ENCODE measurements at regions of chr17 and their contacts with region 1.

Region 1: GRCh38 chr17:38605888-38606645 is at the start of gene SRCIN1:
- DNase-seq: peak; percentile 74
- ATAC-seq: peak; percentile 5
- H3K4me3 Mint-ChIP-seq: peak within 1 kb of the TSS; percentile 71
- H3K27ac Mint-ChIP-seq: no peak within 1 kb of the TSS
- H3K4me1 Mint-ChIP-seq: peaks cover 72% of the 10 kb centered on the region
- H3K27me3 Mint-ChIP-seq: peaks cover 44% of the 10 kb centered on the region
- CTCF ChIP-seq: peak; percentile 99
- total RNA-seq, gene SRCIN1: 10.7 to 17.3 TPM (median 11.1 TPM) in 3 replicates

Region 2: DNA sequence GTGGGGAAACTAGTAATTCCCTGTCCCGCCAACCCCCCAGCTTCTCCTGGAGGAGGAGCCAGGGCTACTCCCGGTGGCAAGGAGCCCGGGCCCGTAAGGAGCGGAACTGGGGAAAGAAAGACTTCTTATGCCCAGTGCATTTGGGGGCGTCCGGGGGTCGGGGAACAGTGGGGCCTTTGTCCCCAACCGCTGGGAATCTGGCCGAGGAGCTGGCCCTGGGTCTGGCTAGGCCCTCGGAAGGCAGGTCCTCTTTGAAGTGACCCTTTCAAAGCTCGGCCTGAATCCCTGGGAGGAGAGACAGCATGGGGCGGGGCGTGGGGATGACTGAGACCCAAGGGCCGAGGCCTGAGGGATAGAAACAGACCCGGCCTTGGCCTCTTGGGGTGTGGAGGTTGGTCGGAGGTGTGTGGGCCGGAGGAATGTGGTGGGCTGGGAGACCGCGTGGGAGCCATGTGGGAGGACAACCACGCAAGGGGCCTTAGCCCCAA is 171.8 kb before region 1 on chr17:
- CTCF ChIA-PET with region 1: no interaction called
- POLR2A ChIA-PET with region 1: no interaction called
- DNase-seq: no peak
- ATAC-seq: no peak
- H3K4me3 Mint-ChIP-seq: no peak overlapping the region
- H3K27ac Mint-ChIP-seq: no peak overlapping the region
- H3K4me1 Mint-ChIP-seq: peaks cover 59% of the 10 kb centered on the region
- H3K27me3 Mint-ChIP-seq: no peaks in the 10 kb centered on the region
- CTCF ChIP-seq: no peak

Region 3: GRCh38 chr17:38617011-38617867 is 11.2 kb after region 1 on chr17:
- CTCF ChIA-PET with region 1: interaction called, 12 read pairs
- POLR2A ChIA-PET with region 1: no interaction called
- DNase-seq: peak; percentile 19
- ATAC-seq: peak; percentile 64
- H3K4me3 Mint-ChIP-seq: no peak overlapping the region
- H3K27ac Mint-ChIP-seq: no peak overlapping the region
- H3K4me1 Mint-ChIP-seq: peaks cover 51% of the 10 kb centered on the region
- H3K27me3 Mint-ChIP-seq: peaks cover 10% of the 10 kb centered on the region
- CTCF ChIP-seq: no peak

Measured in WTC11 (cell line).